PC-9 (cell line): ENCODE measurements at regions of chr18 and their contacts with region 1.

Region 1: DNA sequence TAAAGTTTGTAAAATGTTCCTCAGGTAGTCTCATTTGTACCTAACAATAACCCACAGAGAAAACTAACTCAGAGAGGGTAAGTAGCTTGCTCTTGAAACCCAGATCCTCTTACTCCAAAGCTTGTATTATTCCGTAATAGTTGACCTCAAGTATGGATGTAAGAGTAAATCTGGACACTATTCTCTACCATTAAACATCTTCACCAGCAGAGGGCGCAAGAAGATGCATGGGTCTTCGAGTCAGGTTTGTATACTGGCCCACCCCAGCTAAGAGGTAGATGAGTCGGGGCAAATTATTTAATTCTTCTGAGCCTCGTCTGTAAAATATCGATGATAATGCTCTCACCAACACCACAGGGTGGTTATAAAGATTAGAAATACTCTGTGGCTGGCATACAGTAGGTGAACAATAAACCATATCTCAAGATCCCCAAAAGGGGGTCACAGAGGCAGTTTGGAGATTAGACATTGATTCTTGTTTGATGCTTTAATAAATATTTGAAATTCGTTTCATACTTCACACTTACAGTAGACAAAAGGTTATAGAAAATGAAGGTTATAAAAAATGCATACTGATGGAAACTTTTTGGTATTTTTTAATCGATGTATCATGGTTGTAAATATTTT is 3.5 kb upstream of the CABLES1 start:
- DNase-seq: peak in 1 of 2 experiments; percentile 49
- H3K4me3 ChIP-seq: no peak overlapping the region
- H3K27ac ChIP-seq: no peak overlapping the region
- H3K4me1 ChIP-seq: peaks cover 16% of the 10 kb centered on the region
- H3K27me3 ChIP-seq: no peaks in the 10 kb centered on the region
- CTCF ChIP-seq: peak; percentile 80

Region 2: GRCh38 chr18:23032030-23032582 is 99.7 kb before region 1 on chr18:
- CTCF ChIA-PET with region 1: no interaction called
- POLR2A ChIA-PET with region 1: no interaction called
- intact Hi-C with region 1: loop called (anchors 5 kb)
- DNase-seq: peak in 1 of 2 experiments; percentile 79
- H3K4me3 ChIP-seq: peak overlapping the region; percentile 48
- H3K27ac ChIP-seq: peak overlapping the region; percentile 89
- H3K4me1 ChIP-seq: peaks cover 35% of the 10 kb centered on the region
- H3K27me3 ChIP-seq: no peaks in the 10 kb centered on the region
- CTCF ChIP-seq: no peak

Region 3: GRCh38 chr18:23106580-23106979 is 25.2 kb before region 1 on chr18:
- CTCF ChIA-PET with region 1: interaction called, 11 read pairs
- POLR2A ChIA-PET with region 1: no interaction called
- intact Hi-C with region 1: loop called (anchors 1 kb)
- DNase-seq: peak; percentile 79 to 91
- H3K4me3 ChIP-seq: no peak overlapping the region; the same call in 1 of the 2 replicates
- H3K27ac ChIP-seq: peak overlapping the region; percentile 91
- H3K4me1 ChIP-seq: peaks cover 66% of the 10 kb centered on the region
- H3K27me3 ChIP-seq: no peaks in the 10 kb centered on the region
- CTCF ChIP-seq: no peak

Region 4: GRCh38 chr18:23259701-23260582 is 128.1 kb after region 1 on chr18:
- CTCF ChIA-PET with region 1: no interaction called
- POLR2A ChIA-PET with region 1: no interaction called
- intact Hi-C with region 1: loop called (anchors 10 kb)
- DNase-seq: peak; percentile 77 to 89
- H3K4me3 ChIP-seq: peak overlapping the region; percentile 48; the same call in 1 of the 2 replicates
- H3K27ac ChIP-seq: peak overlapping the region; percentile 91
- H3K4me1 ChIP-seq: peaks cover 45% of the 10 kb centered on the region
- H3K27me3 ChIP-seq: no peaks in the 10 kb centered on the region
- CTCF ChIP-seq: no peak

Region 5: DNA sequence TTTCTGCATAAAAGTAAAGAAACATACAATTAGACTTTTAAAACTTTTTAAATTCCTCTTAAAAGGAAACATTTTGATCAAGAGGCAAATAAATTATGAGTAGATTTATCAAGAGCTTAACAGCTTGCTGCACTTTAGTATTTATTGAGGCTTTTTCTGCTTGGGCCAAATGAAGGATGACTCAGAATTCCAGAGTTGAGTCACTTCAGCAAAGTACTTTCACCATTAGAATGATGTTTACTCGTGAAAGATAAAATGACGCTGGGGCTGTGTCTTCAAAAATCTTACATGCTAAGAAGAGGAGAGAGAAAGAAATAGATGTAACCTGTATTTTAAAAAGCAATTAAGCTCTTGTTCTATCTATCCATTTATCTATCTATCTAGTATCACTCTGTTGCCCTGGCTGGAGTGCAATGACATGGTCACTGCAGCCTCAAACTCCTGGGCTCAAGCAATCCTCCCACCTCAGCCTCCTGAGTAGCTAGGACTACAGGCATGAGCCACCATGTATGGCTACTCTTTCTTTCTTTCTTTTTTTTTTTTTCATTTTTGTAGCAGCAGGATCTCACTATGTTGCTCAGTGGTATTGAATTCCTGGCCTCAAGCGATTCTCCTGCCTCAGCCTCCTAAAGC is 246.0 kb after region 1 on chr18:
- CTCF ChIA-PET with region 1: interaction called, 7 read pairs
- POLR2A ChIA-PET with region 1: no interaction called
- intact Hi-C with region 1: loop called (anchors 1 kb)
- DNase-seq: peak in 1 of 2 experiments; percentile 66
- H3K4me3 ChIP-seq: no peak overlapping the region
- H3K27ac ChIP-seq: peak overlapping the region; percentile 86
- H3K4me1 ChIP-seq: peaks cover 45% of the 10 kb centered on the region
- H3K27me3 ChIP-seq: no peaks in the 10 kb centered on the region
- CTCF ChIP-seq: no peak

Region 6: DNA sequence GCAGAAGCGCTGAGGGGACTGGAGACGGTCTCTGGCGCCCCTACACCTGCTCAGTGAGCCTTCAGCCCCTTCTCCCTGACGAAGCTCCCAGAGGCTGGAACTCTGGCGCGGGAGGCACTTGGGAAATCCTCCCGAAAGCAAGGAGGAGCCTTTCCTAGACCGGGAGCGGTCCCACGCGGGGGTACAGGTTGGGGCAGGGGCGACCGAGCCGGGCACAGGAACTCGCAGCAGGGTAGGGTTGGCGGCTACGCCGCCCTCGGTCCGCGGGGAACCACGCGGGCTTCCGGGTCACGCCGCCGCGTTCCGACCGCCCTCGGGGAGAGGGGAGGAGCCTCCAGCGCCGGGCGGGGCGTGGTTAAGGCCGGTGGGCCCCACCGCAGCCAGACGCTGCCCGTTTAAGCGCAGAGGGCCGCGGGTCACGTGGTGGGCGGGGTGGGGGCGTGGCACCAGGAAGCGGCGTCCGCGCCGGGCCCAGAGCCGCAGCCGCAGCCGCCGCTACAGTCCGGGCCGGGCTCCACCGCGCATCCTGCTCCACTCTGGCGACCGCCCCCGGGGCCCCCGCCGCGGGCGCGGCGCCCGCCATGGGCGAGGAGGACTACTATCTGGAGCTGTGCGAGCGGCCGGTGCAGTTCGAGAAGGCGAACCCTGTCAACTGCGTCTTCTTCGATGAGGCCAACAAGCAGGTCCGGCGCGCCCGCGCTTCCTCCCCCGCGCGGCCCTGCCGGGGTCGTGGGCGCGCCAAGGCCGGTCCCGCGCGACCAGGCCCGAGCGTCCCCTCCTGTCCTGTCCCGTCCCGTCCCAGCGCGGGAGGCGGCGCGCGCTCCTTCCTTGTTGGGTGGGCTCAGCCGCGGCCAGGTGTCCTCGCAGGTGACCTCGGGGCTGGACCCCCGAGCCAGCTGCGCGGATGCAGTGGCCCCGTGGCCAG is 371.5 kb after region 1 on chr18 and contains the start of gene RMC1:
- CTCF ChIA-PET with region 1: no interaction called
- POLR2A ChIA-PET with region 1: no interaction called
- intact Hi-C with region 1: loop called (anchors 5 kb)
- DNase-seq: peak; percentile 73 to 93
- H3K4me3 ChIP-seq: peak within 1 kb of the TSS; percentile 77
- H3K27ac ChIP-seq: peak within 1 kb of the TSS; percentile 64
- H3K4me1 ChIP-seq: peaks cover 13% of the 10 kb centered on the region
- H3K27me3 ChIP-seq: no peaks in the 10 kb centered on the region
- CTCF ChIP-seq: no peak
- total RNA-seq, gene RMC1: 14.5 and 19.6 TPM in 2 replicates

Region 7: GRCh38 chr18:23812546-23813440 is 681.0 kb after region 1 on chr18:
- CTCF ChIA-PET with region 1: no interaction called
- POLR2A ChIA-PET with region 1: no interaction called
- intact Hi-C with region 1: no loop called
- DNase-seq: no peak
- H3K4me3 ChIP-seq: no peak overlapping the region
- H3K27ac ChIP-seq: no peak overlapping the region
- H3K4me1 ChIP-seq: no peaks in the 10 kb centered on the region
- H3K27me3 ChIP-seq: no peaks in the 10 kb centered on the region
- CTCF ChIP-seq: peak; percentile 64